GM10248 (cell line): ENCODE measurements at regions of chr7 and their contacts with region 1.

Region 1: DNA sequence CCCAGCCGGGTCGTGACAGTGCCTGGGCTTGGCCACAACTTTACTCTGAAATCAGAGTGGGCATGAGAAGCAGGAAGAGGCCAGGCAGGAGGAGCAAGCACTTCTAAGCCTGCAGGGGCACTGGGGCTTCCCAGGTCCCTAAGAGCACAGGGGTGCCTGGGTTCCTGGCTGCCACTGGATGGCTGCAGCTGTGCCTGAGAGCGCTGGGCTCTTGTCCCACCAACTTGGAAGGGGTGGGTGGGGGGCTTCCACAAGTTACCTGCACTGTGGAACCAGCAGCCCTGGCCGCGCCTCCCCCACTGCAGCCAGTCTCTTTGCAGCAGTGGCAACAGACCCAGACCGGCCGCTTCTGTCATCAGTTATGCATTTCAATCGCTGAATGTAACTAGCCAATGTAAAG is 434.7 kb upstream of the GRM3 start:
- DNase-seq: no peak
- CTCF ChIP-seq: no peak

Region 2: GRCh38 chr7:86226191-86226590 is 17.2 kb after region 1 on chr7:
- CTCF ChIA-PET with region 1: interaction called, 10 read pairs
- POLR2A ChIA-PET with region 1: no interaction called
- DNase-seq: no peak
- CTCF ChIP-seq: no peak

Region 3: DNA sequence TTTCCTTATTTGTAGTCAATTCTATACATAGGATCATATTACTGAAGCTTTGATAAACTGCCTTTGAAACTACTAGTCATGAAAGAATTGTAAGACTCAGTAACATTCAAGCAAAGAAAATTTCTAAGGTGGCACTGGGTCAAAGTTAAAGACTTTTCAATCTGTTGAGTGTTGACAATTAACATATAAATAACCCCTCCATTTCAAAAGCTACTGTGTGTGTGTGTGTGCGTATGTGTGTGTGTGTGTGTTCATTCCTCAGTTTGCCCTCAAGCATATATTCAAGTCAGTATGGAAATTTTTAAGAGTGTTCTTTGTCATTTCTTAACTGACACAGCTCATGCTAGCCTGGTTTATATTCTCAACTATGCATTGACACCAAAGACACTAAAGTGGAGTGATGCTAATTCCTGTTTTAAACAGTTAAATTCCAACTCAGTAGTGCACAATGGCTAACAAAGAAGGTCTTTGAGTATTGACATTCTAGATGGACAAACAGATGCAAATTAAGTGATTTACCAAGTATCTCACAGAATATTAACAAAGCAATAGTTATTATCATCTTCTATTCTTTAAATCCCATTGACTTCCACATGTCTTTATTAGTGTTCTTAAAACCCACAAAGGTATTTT is 119.9 kb after region 1 on chr7:
- CTCF ChIA-PET with region 1: no interaction called
- POLR2A ChIA-PET with region 1: no interaction called
- DNase-seq: no peak
- CTCF ChIP-seq: no peak